ENCODE measurements at regions of chr17 and their contacts with region 1.

Region 1: DNA sequence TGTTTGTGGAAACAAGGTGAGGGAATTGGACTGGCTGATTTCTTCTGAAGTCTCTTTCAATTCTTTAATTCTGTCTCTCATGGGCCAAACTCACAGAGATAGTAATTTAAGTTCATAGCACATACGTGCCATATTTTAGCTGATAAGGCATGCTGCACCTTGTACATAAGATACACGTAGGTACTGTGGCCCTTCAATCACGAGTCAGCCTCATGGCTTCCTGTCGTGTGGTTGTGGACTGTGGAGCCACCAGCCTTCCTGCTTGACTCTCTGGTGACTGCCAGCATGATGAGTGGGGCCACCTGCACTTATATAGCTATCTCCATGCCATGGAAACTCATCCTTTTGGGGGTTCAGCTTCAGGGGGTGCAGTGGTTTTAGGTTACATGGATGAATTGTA is 25.1 kb downstream of the KSR1 start:
- DNase-seq: peak; percentile 69
- H3K4me3 Mint-ChIP-seq: peak overlapping the region; percentile 70
- H3K27ac Mint-ChIP-seq: peak overlapping the region; percentile 93
- H3K4me1 Mint-ChIP-seq: peaks cover 84% of the 10 kb centered on the region
- H3K27me3 Mint-ChIP-seq: no peaks in the 10 kb centered on the region

Region 2: GRCh38 chr17:27466743-27467375 is 14.5 kb before region 1 on chr17:
- intact Hi-C with region 1: loop called (anchors 1 kb)
- DNase-seq: peak; percentile 74
- H3K4me3 Mint-ChIP-seq: peak overlapping the region; percentile 79
- H3K27ac Mint-ChIP-seq: peak overlapping the region; percentile 97
- H3K4me1 Mint-ChIP-seq: peaks cover 88% of the 10 kb centered on the region
- H3K27me3 Mint-ChIP-seq: no peaks in the 10 kb centered on the region

Measured in activated T-helper 1 cell treated with anti-CD3 and anti-CD28 coated beads, Interleukin-12 subunit alpha, Interleukin-12 subunit beta, Interleukin-2, Interleukin-4 antibody, amounts not matched to agents 30 ng/mL and 10 ng/mL and 1 ng/mL, durations not matched to agents 14 hours and 24 hours and 36 hours (primary cell).